Dorsolateral prefrontal cortex (tissue), 120 donors: ENCODE measurements at regions of chr16 and their contacts with region 1.

Region 1: GRCh38 chr16:68022704-68023522 is at the starts of genes DDX28 and DUS2:
- DNase-seq: peak; percentile 83 to 98 (median 92)
- H3K4me3 ChIP-seq: peak within 1 kb of the TSS; percentile 55 to 100 (median 91)
- H3K27ac ChIP-seq: peak within 1 kb of the TSS; percentile 38 to 97 (median 88)
- H3K27me3 ChIP-seq: no peaks in the 10 kb centered on the region
- CTCF ChIP-seq: peak in 33 of 56 donors; percentile 16 to 64 (median 38)
- total RNA-seq, gene DDX28: 3.1 to 10.7 (median 6.9) TPM
- total RNA-seq, gene DUS2: 10.6 to 25.8 (median 17.6) TPM

Region 2: DNA sequence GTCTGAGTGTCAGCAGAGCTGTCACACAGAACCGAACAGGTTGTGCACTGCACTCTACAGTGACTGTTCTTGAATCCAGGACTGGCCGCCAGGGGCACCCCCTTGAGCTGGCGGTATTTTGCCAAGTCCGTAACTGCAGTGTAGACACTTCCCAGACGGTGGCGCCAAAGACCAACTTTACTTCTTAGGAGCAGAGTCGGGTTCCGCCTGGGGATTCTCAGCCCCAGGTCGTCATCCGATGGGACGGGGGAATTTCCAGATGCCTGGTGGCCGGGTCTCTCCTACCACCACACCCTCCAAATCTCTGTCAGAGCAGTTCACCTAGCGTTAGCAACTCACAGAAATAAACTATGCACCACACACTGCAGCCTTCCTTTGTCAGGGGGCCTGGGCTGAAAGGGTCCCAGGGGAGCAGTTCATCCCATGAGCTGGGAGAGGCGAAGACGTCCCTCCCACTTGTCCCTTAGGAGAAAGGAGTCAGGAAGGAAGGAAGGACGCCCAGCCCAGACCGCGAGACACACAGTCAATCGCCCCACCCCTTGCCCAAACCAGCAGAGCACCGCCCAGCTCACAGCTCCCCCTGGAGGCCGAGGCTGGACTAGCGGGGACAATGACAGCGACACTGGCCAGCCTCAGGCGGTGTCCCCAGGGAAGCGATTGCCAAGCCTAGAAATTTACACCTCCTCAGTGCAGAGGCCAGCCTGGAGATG is 501.7 kb before region 1 on chr16:
- intact Hi-C with region 1: loop called in 1 of 2 experiments (anchors 5 kb)
- DNase-seq: peak; percentile 90 to 98 (median 94)
- H3K4me3 ChIP-seq: peak overlapping the region; percentile 35 to 73 (median 59)
- H3K27ac ChIP-seq: peak overlapping the region; percentile 16 to 98 (median 91)
- H3K27me3 ChIP-seq: no peaks in the 10 kb centered on the region
- CTCF ChIP-seq: peak; percentile 70 to 97 (median 84)

Region 3: GRCh38 chr16:67806428-67807147 is 216.3 kb before region 1 on chr16 and contains the starts of genes RANBP10 and TSNAXIP1:
- intact Hi-C with region 1: loop called in 1 of 2 experiments (anchors 2 kb)
- DNase-seq: peak; percentile 91 to 99 (median 98)
- H3K4me3 ChIP-seq: peak within 1 kb of the TSS; percentile 62 to 100 (median 93)
- H3K27ac ChIP-seq: peak within 1 kb of the TSS in 57 of 59 donors; percentile 3 to 93 (median 80)
- H3K27me3 ChIP-seq: no peaks in the 10 kb centered on the region
- CTCF ChIP-seq: peak in 35 of 56 donors; percentile 2 to 66 (median 24)
- total RNA-seq, gene RANBP10: 13.9 to 32.6 (median 21.2) TPM
- total RNA-seq, gene TSNAXIP1: 3.1 to 16.5 (median 8.5) TPM

Region 4: GRCh38 chr16:67841764-67842508 is 181.0 kb before region 1 on chr16 and contains the start of gene THAP11:
- intact Hi-C with region 1: loop called (anchors 10 kb)
- DNase-seq: peak; percentile 88 to 95 (median 91)
- H3K4me3 ChIP-seq: peak within 1 kb of the TSS; percentile 73 to 100 (median 94)
- H3K27ac ChIP-seq: peak within 1 kb of the TSS; percentile 97 to 100 (median 100)
- H3K27me3 ChIP-seq: no peaks in the 10 kb centered on the region
- CTCF ChIP-seq: peak; percentile 77 to 98 (median 94)
- total RNA-seq, gene THAP11: 17.7 to 30.0 (median 24.0) TPM

Region 5: GRCh38 chr16:67935402-67936123 is 87.3 kb before region 1 on chr16:
- intact Hi-C with region 1: loop called in 1 of 2 experiments (anchors 2 kb)
- DNase-seq: peak; percentile 94 to 98 (median 98)
- H3K4me3 ChIP-seq: peak overlapping the region; percentile 67 to 99 (median 92)
- H3K27ac ChIP-seq: peak overlapping the region; percentile 49 to 96 (median 88)
- H3K27me3 ChIP-seq: no peaks in the 10 kb centered on the region
- CTCF ChIP-seq: peak in 33 of 56 donors; percentile 9 to 58 (median 31)

Region 6: GRCh38 chr16:68310761-68311511 is 288.0 kb after region 1 on chr16 and contains the starts of genes PRMT7 and SLC7A6OS:
- intact Hi-C with region 1: no loop called
- DNase-seq: peak; percentile 90 to 94 (median 93)
- H3K4me3 ChIP-seq: peak within 1 kb of the TSS; percentile 65 to 99 (median 95)
- H3K27ac ChIP-seq: peak within 1 kb of the TSS in 58 of 59 donors; percentile 27 to 96 (median 77)
- H3K27me3 ChIP-seq: no peaks in the 10 kb centered on the region
- CTCF ChIP-seq: peak in 50 of 56 donors; percentile 18 to 81 (median 54)
- total RNA-seq, gene PRMT7: 48.9 to 123 (median 70.7) TPM
- total RNA-seq, gene SLC7A6OS: 11.9 to 33.6 (median 20.1) TPM

Region 7: GRCh38 chr16:68503334-68503733 is 480.4 kb after region 1 on chr16:
- intact Hi-C with region 1: no loop called
- DNase-seq: no peak
- H3K4me3 ChIP-seq: no peak overlapping the region
- H3K27ac ChIP-seq: no peak overlapping the region
- H3K27me3 ChIP-seq: no peaks in the 10 kb centered on the region
- CTCF ChIP-seq: no peak